ENCODE measurements at regions of chr14 and their contacts with region 1.

Region 1: DNA sequence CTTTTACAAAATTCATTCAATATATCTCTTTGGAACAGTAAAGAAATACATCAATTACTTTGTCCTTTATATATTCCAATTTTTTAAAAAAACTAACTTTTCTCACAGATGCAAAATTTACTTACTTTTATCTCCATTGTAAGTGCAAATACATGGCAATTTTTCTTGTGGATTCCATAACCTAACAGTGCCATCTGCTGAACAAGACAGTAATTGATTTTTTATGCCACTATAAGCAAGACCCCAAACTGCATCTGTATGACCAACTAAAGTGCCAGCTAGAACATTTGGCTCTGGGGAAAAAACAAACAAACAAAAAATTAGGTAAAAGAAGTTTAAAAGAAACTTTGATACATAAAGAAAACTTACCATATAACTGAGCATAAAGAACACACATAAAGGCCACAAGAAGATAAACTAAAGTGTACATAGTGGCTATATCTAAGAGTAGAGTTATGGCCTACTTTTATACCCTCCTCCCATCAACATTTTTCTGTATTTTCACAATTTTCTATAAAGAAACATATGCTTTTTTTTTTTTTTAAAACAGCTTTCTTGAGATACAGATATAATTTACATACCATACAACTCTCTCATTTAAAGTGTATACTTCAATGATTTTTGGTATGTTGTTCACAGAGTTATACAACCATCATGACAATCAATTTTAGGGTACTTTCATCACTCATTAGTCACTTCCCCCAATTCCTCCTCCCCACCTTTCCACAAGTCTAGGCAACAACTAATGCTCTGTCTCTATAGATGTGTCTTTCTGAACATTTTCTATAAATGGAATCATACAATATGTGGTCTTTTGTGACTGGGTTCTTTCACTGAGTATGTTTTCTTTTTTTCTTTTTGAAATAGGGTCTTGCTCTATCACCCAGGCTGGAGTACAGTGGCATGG is 32.6 kb downstream of the COCH start:
- DNase-seq: no peak
- H3K4me3 ChIP-seq: no peak overlapping the region
- H3K27ac ChIP-seq: no peak overlapping the region
- H3K4me1 ChIP-seq: no peaks in the 10 kb centered on the region
- H3K27me3 ChIP-seq: no peaks in the 10 kb centered on the region
- CTCF ChIP-seq: no peak

Region 2: GRCh38 chr14:30656190-30656632 is 250.8 kb before region 1 on chr14:
- intact Hi-C with region 1: loop called (anchors 5 kb)
- DNase-seq: peak; percentile 41
- H3K4me3 ChIP-seq: no peak overlapping the region
- H3K27ac ChIP-seq: no peak overlapping the region
- H3K4me1 ChIP-seq: no peaks in the 10 kb centered on the region
- H3K27me3 ChIP-seq: no peaks in the 10 kb centered on the region
- CTCF ChIP-seq: peak; percentile 59